ENCODE measurements at regions of chr5 and their contacts with region 1.

Region 1: GRCh38 chr5:126780165-126780827 is 3.4 kb downstream of the LMNB1 start:
- DNase-seq: no peak
- H3K4me3 ChIP-seq: no peak overlapping the region
- H3K27ac ChIP-seq: no peak overlapping the region
- H3K4me1 ChIP-seq: peaks cover 13 to 26% (median 20%) of the 10 kb centered on the region in 4 donors
- H3K27me3 ChIP-seq: no peaks in the 10 kb centered on the region
- CTCF ChIP-seq: peak; percentile 58 to 66 (median 63)
- EP300 ChIP-seq: no peak
- POLR2A ChIP-seq: no peak

Region 2: DNA sequence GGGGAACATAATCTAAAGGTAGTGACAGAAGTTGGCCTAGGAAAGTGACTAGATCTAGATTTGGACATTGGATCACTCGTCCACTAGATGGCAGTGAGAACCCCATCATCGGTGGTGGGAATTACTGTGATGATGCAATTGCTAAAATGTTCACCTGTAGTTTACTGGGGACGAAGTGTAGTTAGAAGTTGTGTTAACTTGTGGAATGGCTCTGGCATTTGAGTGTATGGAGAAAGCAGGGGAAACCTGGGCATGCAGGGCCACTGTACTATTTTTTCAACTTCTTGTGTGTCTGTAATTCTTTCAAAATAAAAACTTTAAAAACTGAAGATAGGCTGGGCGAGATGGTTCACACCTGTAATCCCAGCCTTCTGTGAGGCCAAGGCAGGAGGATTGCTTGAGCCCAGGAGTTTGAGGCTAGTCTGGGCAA is 104.1 kb before region 1 on chr5:
- intact Hi-C with region 1: loop called (anchors 1 kb)
- DNase-seq: no peak
- H3K4me3 ChIP-seq: no peak overlapping the region
- H3K27ac ChIP-seq: no peak overlapping the region
- H3K4me1 ChIP-seq: no peaks in the 10 kb centered on the region
- H3K27me3 ChIP-seq: no peaks in the 10 kb centered on the region
- CTCF ChIP-seq: peak; percentile 74 to 85 (median 74)
- EP300 ChIP-seq: no peak
- POLR2A ChIP-seq: no peak

Measured in esophagus muscularis mucosa (tissue), 4 donors.